ENCODE measurements at regions of chr18 and their contacts with region 1.

Region 1: DNA sequence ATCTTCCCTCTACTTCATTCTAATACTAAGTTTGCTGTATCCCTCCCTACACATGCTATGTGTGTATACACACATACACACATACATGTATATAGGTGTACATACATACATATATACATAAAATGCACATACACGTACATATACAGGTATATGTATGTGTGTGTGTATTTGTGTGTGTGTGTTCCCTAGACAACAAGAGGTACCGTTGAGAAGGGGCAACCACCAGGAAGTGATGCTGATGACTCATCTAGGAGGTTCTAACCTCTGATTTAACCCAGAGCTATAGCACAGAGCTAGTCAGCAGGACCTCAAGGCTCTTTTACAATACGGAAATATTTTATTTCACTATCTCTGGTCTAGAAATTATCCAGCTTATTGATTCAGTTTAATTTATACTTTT is 139.2 kb downstream of the LAMA3 start:
- DNase-seq: no peak
- H3K4me3 ChIP-seq: no peak overlapping the region
- H3K27ac ChIP-seq: no peak overlapping the region
- H3K4me1 ChIP-seq: no peaks in the 10 kb centered on the region
- H3K27me3 ChIP-seq: no peaks in the 10 kb centered on the region
- CTCF ChIP-seq: no peak
- POLR2A ChIP-seq: no peak

Region 2: DNA sequence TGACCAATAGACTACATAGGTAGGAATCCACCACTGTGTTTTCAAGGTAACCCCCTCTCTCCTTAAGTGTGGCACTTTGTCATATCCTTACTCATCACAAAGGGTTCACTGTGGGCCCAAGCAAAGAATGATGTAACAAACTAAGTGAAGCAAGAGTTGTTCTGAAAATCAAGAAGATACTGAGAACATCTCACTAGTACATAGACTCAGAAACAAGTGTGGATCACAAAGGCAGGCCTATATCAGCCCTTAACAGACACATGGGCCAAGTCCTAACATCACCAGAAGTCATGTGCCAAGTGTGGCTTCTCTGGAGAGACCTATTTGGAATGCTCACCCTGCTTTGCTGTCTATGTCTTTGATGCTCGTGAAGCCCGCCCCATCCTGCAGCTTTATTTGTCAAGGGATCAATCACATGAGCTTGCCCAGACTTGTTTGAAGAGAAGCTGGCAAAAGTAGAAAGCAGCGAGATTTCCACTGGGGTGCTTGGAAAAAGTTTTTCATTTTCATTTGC is 54.9 kb after region 1 on chr18:
- intact Hi-C with region 1: loop called (anchors 5 kb)
- DNase-seq: peak; percentile 85
- H3K4me3 ChIP-seq: no peak overlapping the region
- H3K27ac ChIP-seq: peak overlapping the region; percentile 81 to 87
- H3K4me1 ChIP-seq: peaks cover 5% of the 10 kb centered on the region
- H3K27me3 ChIP-seq: no peaks in the 10 kb centered on the region
- CTCF ChIP-seq: no peak
- POLR2A ChIP-seq: no peak

Region 3: DNA sequence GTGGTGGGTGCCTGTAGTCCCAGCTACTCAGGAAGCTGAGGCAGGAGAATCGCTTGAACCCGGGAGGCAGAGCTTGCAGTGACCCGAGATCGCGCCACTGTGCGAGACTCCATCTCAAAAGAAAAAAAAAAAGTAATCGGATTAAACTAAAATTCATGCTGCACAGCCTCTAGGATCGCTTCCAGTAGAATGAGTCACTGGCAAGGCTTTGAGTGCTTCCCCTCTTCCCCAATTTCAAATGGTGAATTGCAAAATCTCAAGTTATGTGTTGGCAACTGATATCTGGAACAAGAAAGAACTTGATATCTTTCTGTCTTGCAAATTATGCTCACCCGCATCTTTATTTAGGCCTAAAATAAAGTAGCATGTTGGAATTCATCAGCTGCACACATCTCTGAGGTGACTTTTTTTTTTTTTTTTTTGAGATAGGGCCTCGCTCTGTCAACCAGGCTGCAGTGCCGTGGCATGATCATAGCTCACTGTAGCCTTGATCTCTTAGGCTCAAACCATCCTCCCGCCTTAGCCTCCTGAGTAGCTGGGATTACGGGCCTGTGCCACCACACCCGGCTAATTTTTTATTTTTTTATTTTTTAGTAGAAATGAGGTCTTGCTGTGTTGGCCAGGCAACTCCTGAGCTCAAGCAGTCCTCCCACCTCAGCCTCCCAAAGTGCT is 198.9 kb after region 1 on chr18:
- intact Hi-C with region 1: no loop called
- DNase-seq: peak; percentile 25
- H3K4me3 ChIP-seq: no peak overlapping the region
- H3K27ac ChIP-seq: no peak overlapping the region
- H3K4me1 ChIP-seq: no peaks in the 10 kb centered on the region
- H3K27me3 ChIP-seq: no peaks in the 10 kb centered on the region
- CTCF ChIP-seq: no peak
- POLR2A ChIP-seq: no peak

Region 4: DNA sequence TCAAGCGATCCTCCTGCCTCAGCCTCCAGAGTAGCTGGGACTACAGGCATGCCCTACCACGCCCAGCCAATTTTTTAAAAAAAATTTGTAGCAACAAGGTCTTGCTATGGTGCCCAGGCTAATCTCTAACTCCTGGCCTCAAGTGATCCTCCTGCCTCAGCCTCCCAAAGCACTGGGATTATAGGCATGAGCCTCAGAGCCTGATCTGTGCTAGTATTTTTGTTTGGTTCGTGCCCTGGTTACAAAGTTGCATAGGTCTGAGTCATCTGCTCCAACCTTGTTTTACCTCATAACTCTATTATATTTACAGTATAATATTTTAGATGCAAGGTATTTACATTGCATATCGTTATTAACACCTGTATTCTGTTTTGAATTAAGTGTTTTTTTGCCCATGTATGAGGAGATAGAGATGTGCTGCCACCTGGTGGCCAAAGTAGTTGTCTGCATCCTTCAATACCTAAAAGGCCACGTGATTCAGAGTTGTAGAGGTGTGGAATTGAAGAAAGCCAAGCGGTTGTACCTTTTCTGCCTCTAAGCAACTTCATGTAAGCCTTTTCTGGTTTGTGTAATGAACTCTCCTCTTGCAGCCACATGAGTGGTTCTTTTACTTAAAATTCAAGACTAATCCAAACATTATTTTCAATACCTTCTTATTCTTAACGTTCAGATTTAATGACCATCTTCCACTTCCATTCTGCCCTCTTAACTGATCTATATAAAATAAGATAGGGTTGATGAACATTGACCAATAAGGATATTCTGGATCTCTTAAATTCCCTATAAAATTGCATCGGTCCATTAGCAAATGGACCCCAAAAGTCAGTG is 290.5 kb after region 1 on chr18:
- intact Hi-C with region 1: loop called (anchors 10 kb)
- DNase-seq: peak; percentile 67
- H3K4me3 ChIP-seq: no peak overlapping the region
- H3K27ac ChIP-seq: no peak overlapping the region
- H3K4me1 ChIP-seq: no peaks in the 10 kb centered on the region
- H3K27me3 ChIP-seq: no peaks in the 10 kb centered on the region
- CTCF ChIP-seq: peak; percentile 85 to 98 (median 90)
- POLR2A ChIP-seq: no peak

Region 5: GRCh38 chr18:24649571-24649970 is 821.1 kb after region 1 on chr18:
- intact Hi-C with region 1: no loop called
- DNase-seq: no peak
- H3K4me3 ChIP-seq: no peak overlapping the region
- H3K27ac ChIP-seq: no peak overlapping the region
- H3K4me1 ChIP-seq: no peaks in the 10 kb centered on the region
- H3K27me3 ChIP-seq: no peaks in the 10 kb centered on the region
- CTCF ChIP-seq: no peak
- POLR2A ChIP-seq: no peak

Measured in prostate gland (tissue), 2 donors.